Colonic mucosa (tissue), 4 donors: ENCODE measurements at regions of chr16 and their contacts with region 1.

Region 1: DNA sequence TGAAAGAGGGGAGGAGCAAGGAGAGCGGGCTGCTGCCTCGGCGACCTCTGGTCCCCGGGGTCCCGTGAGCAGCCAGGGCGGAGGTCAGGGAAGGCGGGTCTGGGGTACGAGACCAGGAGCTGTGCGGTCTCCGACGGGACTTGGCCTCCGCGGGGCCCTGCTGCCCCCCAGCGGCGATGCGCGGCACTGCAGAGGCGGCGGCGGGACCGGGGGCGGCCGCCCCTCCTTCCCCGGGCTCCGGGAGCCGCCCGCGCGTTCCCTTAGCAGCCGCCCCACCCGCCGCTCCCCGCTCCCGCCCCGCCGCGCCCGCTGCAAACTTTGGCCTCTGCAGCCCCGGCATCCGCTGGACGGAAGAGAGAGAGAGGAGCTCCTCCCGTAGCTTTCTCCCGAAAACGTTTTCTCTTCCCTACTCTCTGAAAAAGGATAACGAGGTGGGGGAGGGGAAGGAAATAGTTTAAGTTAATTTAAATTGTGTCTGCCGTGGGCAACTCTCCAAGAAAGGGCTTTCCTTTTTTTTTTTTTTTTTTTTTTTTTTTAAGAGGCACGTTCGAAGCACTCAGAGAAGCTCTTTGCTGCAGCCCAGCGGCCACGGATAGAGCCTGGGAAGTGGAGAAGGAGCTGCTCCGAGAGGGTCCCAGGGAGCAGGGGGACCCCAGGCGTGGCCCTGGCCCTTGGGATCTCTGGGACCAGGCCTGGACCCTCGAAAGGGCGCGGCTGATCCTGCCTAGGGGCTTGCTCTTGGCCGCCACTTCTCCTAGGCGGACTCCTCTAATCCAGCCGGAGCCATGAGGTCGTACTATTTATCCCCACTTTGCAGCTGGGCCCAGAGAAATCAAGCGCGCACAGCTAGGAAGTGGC is 43.2 kb downstream of the C16orf82 start:
- DNase-seq: peak; percentile 91
- H3K4me3 ChIP-seq: peak overlapping the region; percentile 16
- H3K27ac ChIP-seq: peak overlapping the region; percentile 48
- H3K4me1 ChIP-seq: peaks cover 3% of the 10 kb centered on the region
- H3K27me3 ChIP-seq: no peaks in the 10 kb centered on the region
- CTCF ChIP-seq: peak; percentile 93

Region 2: GRCh38 chr16:25838724-25839186 is 1271.1 kb before region 1 on chr16:
- intact Hi-C with region 1: loop called (anchors 5 kb)
- DNase-seq: peak; percentile 20
- H3K4me3 ChIP-seq: no peak overlapping the region
- H3K27ac ChIP-seq: no peak overlapping the region
- H3K4me1 ChIP-seq: no peaks in the 10 kb centered on the region
- H3K27me3 ChIP-seq: no peaks in the 10 kb centered on the region
- CTCF ChIP-seq: peak; percentile 64

Region 3: DNA sequence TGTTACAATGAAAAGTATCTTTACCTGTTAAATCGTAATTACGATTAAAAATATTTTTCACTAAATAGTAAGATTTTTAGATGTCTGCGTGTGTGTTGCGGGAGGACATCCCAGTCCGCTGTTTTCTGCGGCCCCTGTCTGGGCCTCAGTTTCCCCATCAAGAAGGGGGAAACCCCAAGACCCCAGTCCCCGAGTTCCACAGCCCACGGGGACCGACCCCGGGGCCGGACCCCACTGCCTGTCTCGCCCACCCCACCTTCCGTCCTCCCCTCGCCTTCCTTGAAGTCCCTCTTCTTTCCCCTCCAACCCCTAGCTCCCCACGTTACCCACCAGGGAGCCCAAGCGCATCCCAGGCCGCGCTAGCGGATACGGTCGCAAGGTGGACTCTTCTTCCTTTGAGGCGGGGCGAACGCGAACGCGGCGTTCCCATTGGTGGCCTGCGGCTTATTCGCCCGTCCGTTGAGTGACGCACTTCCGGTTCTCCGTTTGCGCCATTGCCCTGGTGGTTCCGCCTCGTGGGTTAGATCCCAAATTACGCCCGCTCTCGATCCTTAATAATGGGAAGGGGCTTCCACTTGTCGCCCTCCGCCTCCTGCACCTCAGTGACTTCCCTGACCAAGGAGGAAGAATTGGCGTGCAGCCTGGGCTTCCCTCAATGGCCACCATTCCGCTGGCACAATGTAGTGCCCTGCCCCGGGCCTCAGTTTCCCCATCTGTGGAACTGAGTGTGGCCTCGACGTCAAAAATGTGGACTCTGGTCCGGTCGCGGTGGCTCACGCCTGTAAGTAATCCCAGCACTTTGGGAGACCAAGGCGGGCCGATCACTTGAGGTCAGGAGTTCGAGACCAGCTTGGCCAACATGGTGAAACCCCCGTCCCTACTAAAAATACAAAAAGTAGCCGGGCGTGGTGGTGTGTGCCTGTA is 158.7 kb after region 1 on chr16 and contains the start of gene NSMCE1:
- intact Hi-C with region 1: no loop called
- DNase-seq: peak; percentile 100
- H3K4me3 ChIP-seq: peak within 1 kb of the TSS; percentile 80
- H3K27ac ChIP-seq: peak within 1 kb of the TSS; percentile 75
- H3K4me1 ChIP-seq: peaks cover 2% of the 10 kb centered on the region
- H3K27me3 ChIP-seq: no peaks in the 10 kb centered on the region
- CTCF ChIP-seq: no peak
- total RNA-seq, gene NSMCE1: 37.6 to 58.2 TPM